Activated CD8-positive, alpha-beta T cell treated with anti-CD3 and anti-CD28 coated beads, Interleukin-2, amount 10 ng/mL, durations not matched to agents 7 days and 5 days (primary cell): ENCODE measurements at regions of chr11 and their contacts with region 1.

Region 1: DNA sequence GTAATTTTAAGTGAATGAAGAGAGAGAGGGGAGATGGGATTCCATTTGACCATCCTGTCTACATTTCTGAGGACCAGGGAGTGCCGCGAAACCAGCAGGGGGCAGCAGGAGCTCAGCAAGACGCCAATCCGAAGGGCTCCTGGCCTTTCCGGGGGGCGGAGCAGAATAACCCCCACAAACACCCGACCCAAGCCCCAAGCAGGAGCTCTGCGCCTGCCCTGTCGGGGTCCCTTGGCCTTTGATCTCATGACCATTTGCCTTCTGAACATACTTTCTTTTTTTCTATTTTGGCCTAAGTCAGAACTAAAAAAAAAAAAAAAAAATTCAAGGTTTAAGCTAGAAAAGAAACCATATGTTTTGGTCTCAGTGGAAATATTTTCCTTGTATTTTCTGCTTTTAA is 21.9 kb upstream of the SCN2B start:
- DNase-seq: peak; percentile 90
- ATAC-seq: peak; percentile 31
- H3K4me3 Mint-ChIP-seq: peak overlapping the region; percentile 43
- H3K27ac Mint-ChIP-seq: peak overlapping the region; percentile 72
- H3K4me1 Mint-ChIP-seq: peaks cover 17% of the 10 kb centered on the region
- H3K27me3 Mint-ChIP-seq: no peaks in the 10 kb centered on the region

Region 2: DNA sequence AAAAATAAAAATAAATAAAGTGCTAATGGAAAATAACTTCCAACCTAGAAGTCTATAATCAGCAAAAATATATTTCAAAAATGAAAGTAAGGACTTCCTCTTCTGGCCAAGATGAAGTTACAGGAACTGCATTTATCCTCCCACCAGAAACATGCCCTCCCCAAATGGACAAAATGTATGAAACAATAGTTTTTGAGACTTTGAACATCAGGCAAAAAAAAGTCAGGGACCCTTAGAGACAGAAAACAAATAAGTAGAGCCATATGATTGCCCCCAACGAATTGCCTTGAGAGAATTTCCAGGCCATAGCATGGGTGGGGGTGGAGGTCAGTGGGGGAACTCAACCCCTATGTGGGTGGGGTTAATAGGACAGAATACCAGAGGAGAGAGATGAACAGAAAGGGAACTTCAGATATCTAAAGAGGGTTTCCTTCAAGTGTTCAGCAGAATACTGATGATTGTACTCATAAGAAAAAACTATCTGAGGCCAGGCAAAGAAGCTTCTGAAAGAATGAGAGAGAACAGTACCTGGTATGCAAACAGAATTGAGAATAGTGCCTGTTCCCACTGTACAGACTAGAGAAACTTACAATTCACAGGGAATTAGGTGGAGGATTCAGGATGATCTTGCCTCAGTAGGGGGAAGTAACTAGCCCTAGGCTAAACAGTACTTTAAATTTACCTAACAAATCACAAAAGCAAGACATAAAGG is 238.8 kb before region 1 on chr11:
- CTCF ChIA-PET with region 1: no interaction called
- POLR2A ChIA-PET with region 1: no interaction called
- DNase-seq: no peak
- ATAC-seq: no peak
- H3K4me3 Mint-ChIP-seq: no peak overlapping the region
- H3K27ac Mint-ChIP-seq: peak overlapping the region; percentile 80
- H3K4me1 Mint-ChIP-seq: peaks cover 44% of the 10 kb centered on the region
- H3K27me3 Mint-ChIP-seq: no peaks in the 10 kb centered on the region

Region 3: GRCh38 chr11:118171269-118172062 is 26.9 kb before region 1 on chr11:
- CTCF ChIA-PET with region 1: interaction called, 16 read pairs
- POLR2A ChIA-PET with region 1: no interaction called
- DNase-seq: peak; percentile 82
- ATAC-seq: peak; percentile 90
- H3K4me3 Mint-ChIP-seq: no peak overlapping the region
- H3K27ac Mint-ChIP-seq: no peak overlapping the region
- H3K4me1 Mint-ChIP-seq: peaks cover 10% of the 10 kb centered on the region
- H3K27me3 Mint-ChIP-seq: peaks cover 16% of the 10 kb centered on the region

Region 4: GRCh38 chr11:118227865-118228785 is 29.8 kb after region 1 on chr11:
- CTCF ChIA-PET with region 1: interaction called, 53 read pairs
- POLR2A ChIA-PET with region 1: interaction called, 57 read pairs
- DNase-seq: peak; percentile 66
- ATAC-seq: peak; percentile 32
- H3K4me3 Mint-ChIP-seq: peak overlapping the region; percentile 65
- H3K27ac Mint-ChIP-seq: no peak overlapping the region
- H3K4me1 Mint-ChIP-seq: peaks cover 7% of the 10 kb centered on the region
- H3K27me3 Mint-ChIP-seq: no peaks in the 10 kb centered on the region

Region 5: GRCh38 chr11:118258410-118258809 is 60.0 kb after region 1 on chr11:
- CTCF ChIA-PET with region 1: interaction called, 74 read pairs
- POLR2A ChIA-PET with region 1: interaction called, 3 read pairs
- DNase-seq: peak; percentile 42
- ATAC-seq: no peak
- H3K4me3 Mint-ChIP-seq: no peak overlapping the region
- H3K27ac Mint-ChIP-seq: no peak overlapping the region
- H3K4me1 Mint-ChIP-seq: peaks cover 56% of the 10 kb centered on the region
- H3K27me3 Mint-ChIP-seq: no peaks in the 10 kb centered on the region

Region 6: DNA sequence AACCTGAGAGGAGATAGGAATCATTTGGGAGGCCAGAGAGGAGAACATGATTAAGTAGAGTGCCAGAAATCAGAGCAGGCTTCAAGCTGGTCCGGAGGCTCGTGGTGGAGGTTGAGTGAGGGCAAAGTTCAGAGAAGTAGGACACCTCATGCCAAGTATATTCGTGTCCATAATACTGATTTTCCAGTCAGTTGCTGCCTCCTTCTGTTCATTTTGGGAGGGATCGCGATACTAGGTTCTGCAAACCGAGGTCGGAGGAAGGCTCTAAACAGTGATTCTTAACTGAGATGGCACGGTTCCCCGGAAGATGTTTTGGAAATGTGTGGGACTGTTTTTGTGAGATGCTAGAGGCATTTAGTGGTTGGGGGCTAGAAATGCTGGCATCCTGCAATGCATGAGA is 92.6 kb after region 1 on chr11:
- CTCF ChIA-PET with region 1: interaction called, 52 read pairs
- POLR2A ChIA-PET with region 1: interaction called, 4 read pairs
- DNase-seq: peak; percentile 68
- ATAC-seq: peak; percentile 88
- H3K4me3 Mint-ChIP-seq: no peak overlapping the region
- H3K27ac Mint-ChIP-seq: peak overlapping the region; percentile 7
- H3K4me1 Mint-ChIP-seq: peaks cover 30% of the 10 kb centered on the region
- H3K27me3 Mint-ChIP-seq: no peaks in the 10 kb centered on the region

Region 7: GRCh38 chr11:118338637-118339061 is 140.3 kb after region 1 on chr11:
- CTCF ChIA-PET with region 1: interaction called, 17 read pairs
- POLR2A ChIA-PET with region 1: interaction called, 7 read pairs
- DNase-seq: peak; percentile 97
- ATAC-seq: peak; percentile 67
- H3K4me3 Mint-ChIP-seq: peak overlapping the region; percentile 84
- H3K27ac Mint-ChIP-seq: peak overlapping the region; percentile 96
- H3K4me1 Mint-ChIP-seq: peaks cover 64% of the 10 kb centered on the region
- H3K27me3 Mint-ChIP-seq: no peaks in the 10 kb centered on the region